Transverse colon (tissue), 4 donors: ENCODE measurements at regions of chr1 and their contacts with region 1.

Region 1: GRCh38 chr1:86833461-86834215 is 80.3 kb downstream of the SELENOF start:
- DNase-seq: peak; percentile 78
- H3K4me3 ChIP-seq: no peak overlapping the region
- H3K27ac ChIP-seq: no peak overlapping the region
- H3K4me1 ChIP-seq: peaks cover 0 to 8% (median 0%) of the 10 kb centered on the region in 4 donors
- H3K27me3 ChIP-seq: no peaks in the 10 kb centered on the region
- CTCF ChIP-seq: peak; percentile 54 to 66 (median 58)
- EP300 ChIP-seq: no peak
- POLR2A ChIP-seq: no peak

Region 2: GRCh38 chr1:86950712-86951419 is 117.2 kb after region 1 on chr1:
- in situ Hi-C with region 1: loop called in 2 of 4 experiments (anchors 25 kb)
- intact Hi-C with region 1: loop called (anchors 10 kb)
- DNase-seq: no peak
- H3K4me3 ChIP-seq: no peak overlapping the region
- H3K27ac ChIP-seq: no peak overlapping the region
- H3K4me1 ChIP-seq: no peaks in the 10 kb centered on the region
- H3K27me3 ChIP-seq: no peaks in the 10 kb centered on the region
- CTCF ChIP-seq: no peak
- EP300 ChIP-seq: no peak
- POLR2A ChIP-seq: no peak

Region 3: DNA sequence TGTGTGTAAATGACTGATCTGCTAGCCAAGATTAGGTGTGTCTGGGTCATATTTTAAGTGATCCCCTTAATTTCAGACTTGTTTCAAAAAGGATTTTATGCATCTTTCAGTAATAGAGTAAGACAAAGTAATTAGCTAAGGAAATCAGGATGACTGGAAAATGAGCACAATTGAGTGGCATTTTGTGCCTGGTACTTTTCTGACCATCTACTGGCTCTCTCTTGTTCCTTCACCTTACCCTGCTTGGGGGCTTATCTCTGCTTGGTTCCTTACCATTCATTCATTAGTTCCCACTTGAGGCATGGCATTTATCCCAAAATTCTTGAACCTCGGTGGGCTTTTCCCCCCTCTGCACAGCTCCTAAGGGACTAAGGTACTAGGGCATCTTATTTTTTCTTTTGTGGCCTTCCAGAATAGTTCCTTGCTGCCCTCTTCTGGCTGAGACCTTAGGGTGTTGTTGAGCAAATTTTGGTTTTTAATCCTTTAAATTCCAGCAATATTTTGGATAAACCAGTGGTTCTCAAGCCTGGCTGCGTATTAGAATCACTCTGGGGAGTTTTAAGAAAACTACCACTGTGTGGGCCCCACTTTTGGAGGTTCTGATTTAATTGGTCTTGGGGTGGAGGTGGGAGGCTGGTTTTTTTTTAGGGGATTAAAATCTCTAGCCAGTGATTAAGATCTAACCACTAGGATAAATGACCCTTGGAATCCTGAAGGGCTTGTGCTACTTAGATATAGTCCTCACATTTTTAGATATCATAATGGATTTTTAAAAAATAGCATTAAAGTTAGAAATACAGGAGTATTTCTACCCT is 131.6 kb after region 1 on chr1:
- in situ Hi-C with region 1: loop called in 2 of 4 experiments (anchors 25 kb)
- intact Hi-C with region 1: no loop called
- DNase-seq: no peak
- H3K4me3 ChIP-seq: no peak overlapping the region
- H3K27ac ChIP-seq: no peak overlapping the region
- H3K4me1 ChIP-seq: no peaks in the 10 kb centered on the region
- H3K27me3 ChIP-seq: no peaks in the 10 kb centered on the region
- CTCF ChIP-seq: peak; percentile 50 to 57 (median 55)
- EP300 ChIP-seq: no peak
- POLR2A ChIP-seq: no peak

Region 4: DNA sequence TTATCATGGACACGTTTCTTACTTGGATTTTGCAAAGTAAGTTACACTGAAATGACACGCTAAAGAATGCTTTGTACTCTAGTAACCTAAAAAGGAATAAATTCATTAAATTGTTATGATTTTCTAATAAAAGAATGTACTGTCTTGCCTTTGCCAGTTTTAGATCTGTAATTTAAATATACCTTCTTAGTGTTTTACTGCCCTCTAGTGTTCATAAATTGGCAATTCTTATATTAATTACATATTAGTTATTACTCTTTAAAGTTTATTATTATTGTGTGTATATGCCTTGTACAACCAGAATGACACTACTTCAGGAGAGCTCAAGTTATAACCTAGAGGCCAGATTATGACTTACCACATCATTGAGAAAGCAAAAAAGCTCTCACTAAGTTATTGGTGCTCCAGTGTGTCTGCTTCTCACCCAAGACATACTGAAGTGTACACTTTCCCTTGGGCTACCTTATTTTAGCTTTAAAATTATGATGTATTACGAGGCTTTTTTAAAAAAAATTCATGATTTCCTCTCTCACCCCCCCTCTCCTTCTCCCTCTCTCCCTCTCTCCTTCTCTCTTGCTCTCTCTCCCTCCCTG is 250.7 kb after region 1 on chr1:
- in situ Hi-C with region 1: loop called (anchors 5 to 25 kb)
- intact Hi-C with region 1: loop called (anchors 5 kb)
- DNase-seq: no peak
- H3K4me3 ChIP-seq: no peak overlapping the region
- H3K27ac ChIP-seq: no peak overlapping the region
- H3K4me1 ChIP-seq: no peaks in the 10 kb centered on the region
- H3K27me3 ChIP-seq: no peaks in the 10 kb centered on the region
- CTCF ChIP-seq: peak; percentile 40 to 70 (median 57)
- EP300 ChIP-seq: no peak
- POLR2A ChIP-seq: no peak